Activated CD8-positive, alpha-beta T cell treated with anti-CD3 and anti-CD28 coated beads for 36 hours (primary cell): ENCODE measurements at regions of chrX and their contacts with region 1.

Region 1: GRCh38 chrX:15143050-15143824 is 126.6 kb downstream of the ASB9 start:
- DNase-seq: peak; percentile 74
- ATAC-seq: peak; percentile 57
- H3K4me3 Mint-ChIP-seq: no peak overlapping the region
- H3K27ac Mint-ChIP-seq: peak overlapping the region; percentile 4
- H3K4me1 Mint-ChIP-seq: peaks cover 18% of the 10 kb centered on the region
- H3K27me3 Mint-ChIP-seq: peaks cover 2% of the 10 kb centered on the region
- CTCF ChIP-seq: peak; percentile 65

Region 2: DNA sequence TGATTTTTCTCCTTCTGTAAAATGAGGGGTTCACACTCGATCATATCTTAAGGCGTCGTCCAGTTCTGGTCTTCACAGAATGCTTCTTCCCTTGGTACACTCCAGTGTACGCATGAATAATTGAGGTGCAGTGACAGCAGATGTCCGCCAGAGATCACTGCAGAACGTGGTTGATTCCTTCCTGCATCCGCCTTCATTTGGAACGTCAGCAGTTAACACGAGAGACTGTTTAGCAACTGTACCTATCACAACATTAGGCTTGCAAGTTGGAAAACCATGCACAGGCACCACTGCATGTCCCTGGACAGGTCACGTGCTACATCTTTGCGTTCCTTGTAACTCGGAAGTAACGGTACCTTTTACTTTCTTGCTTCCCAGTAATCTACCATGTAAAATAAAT is 1047.5 kb before region 1 on chrX:
- CTCF ChIA-PET with region 1: no interaction called
- POLR2A ChIA-PET with region 1: no interaction called
- intact Hi-C with region 1: loop called (anchors 10 kb)
- DNase-seq: peak; percentile 51
- ATAC-seq: peak; percentile 87
- H3K4me3 Mint-ChIP-seq: no peak overlapping the region
- H3K27ac Mint-ChIP-seq: no peak overlapping the region
- H3K4me1 Mint-ChIP-seq: no peaks in the 10 kb centered on the region
- H3K27me3 Mint-ChIP-seq: peaks cover 3% of the 10 kb centered on the region
- CTCF ChIP-seq: peak; percentile 47

Region 3: DNA sequence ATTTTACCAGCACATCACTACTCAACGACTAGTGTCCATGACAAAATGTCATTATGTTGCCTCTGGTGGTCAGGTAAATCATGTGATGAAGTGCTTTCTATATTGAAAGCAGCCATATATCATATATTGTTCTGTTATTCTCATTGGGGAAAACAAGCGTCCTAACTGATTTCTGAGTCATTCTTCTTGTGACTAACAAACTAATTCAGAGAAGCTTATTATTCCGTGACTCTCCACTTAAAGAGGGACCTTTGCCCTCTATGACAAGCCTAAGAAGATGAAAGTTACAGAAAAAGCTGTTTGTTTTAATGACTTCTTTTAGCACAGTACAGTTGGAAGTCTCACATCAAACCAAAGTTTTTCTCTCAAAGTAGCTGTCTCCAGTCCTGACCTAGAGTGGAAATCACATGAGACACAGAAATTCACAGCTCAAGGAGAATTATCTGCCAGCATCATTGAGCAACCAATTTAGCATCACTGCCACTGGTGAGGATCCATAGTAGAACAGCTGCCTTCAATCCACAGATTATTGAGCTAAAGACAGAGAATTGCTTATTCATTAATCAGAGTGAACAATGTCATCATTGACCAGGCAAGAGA is 90.3 kb after region 1 on chrX:
- CTCF ChIA-PET with region 1: interaction called, 11 read pairs
- POLR2A ChIA-PET with region 1: no interaction called
- intact Hi-C with region 1: no loop called
- DNase-seq: no peak
- ATAC-seq: no peak
- H3K4me3 Mint-ChIP-seq: no peak overlapping the region
- H3K27ac Mint-ChIP-seq: no peak overlapping the region
- H3K4me1 Mint-ChIP-seq: no peaks in the 10 kb centered on the region
- H3K27me3 Mint-ChIP-seq: no peaks in the 10 kb centered on the region
- CTCF ChIP-seq: no peak

Region 4: GRCh38 chrX:15242899-15243555 is 99.8 kb after region 1 on chrX:
- CTCF ChIA-PET with region 1: interaction called, 22 read pairs
- POLR2A ChIA-PET with region 1: no interaction called
- intact Hi-C with region 1: no loop called
- DNase-seq: peak; percentile 64
- ATAC-seq: no peak
- H3K4me3 Mint-ChIP-seq: no peak overlapping the region
- H3K27ac Mint-ChIP-seq: no peak overlapping the region
- H3K4me1 Mint-ChIP-seq: peaks cover 9% of the 10 kb centered on the region
- H3K27me3 Mint-ChIP-seq: no peaks in the 10 kb centered on the region
- CTCF ChIP-seq: peak; percentile 52